ENCODE measurements at regions of chr14 and their contacts with region 1.

Region 1: DNA sequence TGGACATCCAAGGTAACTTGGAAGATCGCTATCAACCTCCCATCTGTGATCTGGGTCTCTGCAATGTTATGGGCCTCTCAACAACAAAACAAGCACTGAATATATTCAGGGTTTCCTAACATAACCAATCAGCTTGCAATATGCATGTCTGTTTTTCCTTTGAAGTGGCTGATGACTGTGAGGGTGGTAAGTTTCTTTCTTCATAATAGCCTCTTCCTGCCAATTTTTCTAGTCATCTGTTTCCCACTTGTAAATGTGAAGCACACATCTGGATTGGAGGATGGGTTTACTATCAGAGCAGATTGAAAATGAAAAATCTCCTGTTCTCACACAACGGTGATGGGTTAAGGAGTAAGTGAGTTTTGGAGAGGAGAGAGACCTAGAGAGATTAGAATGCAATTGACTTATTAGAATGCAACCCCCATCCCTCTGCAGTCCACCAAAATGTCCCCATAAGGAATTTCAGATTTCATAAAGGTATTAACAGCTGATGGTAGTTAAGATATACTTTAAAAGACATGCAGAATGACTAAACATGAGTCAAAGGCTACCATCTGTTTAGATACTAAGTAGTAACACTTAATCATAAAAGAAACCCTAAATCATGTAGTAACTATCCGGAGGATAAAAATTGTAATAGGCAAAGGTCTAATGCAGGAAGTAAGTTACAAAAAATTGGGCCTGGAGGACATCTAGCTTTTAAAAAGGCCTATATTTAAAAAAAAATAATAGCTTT is 58.4 kb upstream of the SAV1 start:
- DNase-seq: peak; percentile 37
- H3K4me3 Mint-ChIP-seq: peak overlapping the region; percentile 52
- H3K27ac Mint-ChIP-seq: peak overlapping the region; percentile 92
- H3K4me1 Mint-ChIP-seq: peaks cover 23% of the 10 kb centered on the region
- H3K27me3 Mint-ChIP-seq: no peaks in the 10 kb centered on the region

Region 2: DNA sequence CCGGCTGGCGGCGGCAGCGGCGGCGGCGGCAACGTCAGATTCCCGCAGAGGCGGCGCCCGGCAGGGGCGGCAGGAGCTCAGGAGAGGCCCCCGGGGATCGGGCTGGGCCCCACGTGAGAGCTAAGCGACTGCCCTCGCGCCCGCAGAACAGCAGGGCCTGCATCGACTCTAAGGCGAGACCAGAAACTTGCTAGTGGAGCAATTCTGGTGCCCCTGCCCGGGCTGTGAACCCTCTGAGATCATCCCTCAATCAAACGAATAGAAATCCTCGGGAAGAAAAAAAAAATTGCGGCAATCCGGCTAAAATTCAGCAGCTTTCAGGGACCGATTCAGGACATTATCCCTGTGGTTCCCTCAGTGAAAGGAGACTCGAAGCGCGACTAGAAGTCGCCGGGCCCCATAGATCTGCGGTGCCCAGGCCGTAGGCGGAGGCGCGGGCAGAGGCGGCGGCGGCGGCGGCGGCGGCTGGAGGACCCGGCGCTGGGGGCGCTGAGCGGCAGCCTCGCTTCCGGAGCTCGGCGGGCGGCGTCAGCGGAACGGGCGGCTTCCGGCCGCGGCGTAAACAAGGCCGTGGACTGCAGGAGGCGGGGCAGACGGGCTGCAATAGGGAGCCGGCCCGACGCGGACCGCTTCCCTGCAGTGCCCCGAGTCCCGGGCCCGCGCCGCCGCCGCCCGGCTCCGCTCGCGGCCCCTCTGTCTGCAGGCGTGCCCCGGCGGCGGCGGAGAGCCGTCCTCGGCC is 958.8 kb before region 1 on chr14 and contains the start of gene KLHDC2:
- intact Hi-C with region 1: loop called (anchors 5 kb)
- DNase-seq: peak; percentile 89
- H3K4me3 Mint-ChIP-seq: peak within 1 kb of the TSS; percentile 99
- H3K27ac Mint-ChIP-seq: peak within 1 kb of the TSS; percentile 100
- H3K4me1 Mint-ChIP-seq: peaks cover 33% of the 10 kb centered on the region
- H3K27me3 Mint-ChIP-seq: peaks cover 2% of the 10 kb centered on the region
- total RNA-seq, gene KLHDC2: 23.7 and 26.2 TPM in 2 replicates

Region 3: DNA sequence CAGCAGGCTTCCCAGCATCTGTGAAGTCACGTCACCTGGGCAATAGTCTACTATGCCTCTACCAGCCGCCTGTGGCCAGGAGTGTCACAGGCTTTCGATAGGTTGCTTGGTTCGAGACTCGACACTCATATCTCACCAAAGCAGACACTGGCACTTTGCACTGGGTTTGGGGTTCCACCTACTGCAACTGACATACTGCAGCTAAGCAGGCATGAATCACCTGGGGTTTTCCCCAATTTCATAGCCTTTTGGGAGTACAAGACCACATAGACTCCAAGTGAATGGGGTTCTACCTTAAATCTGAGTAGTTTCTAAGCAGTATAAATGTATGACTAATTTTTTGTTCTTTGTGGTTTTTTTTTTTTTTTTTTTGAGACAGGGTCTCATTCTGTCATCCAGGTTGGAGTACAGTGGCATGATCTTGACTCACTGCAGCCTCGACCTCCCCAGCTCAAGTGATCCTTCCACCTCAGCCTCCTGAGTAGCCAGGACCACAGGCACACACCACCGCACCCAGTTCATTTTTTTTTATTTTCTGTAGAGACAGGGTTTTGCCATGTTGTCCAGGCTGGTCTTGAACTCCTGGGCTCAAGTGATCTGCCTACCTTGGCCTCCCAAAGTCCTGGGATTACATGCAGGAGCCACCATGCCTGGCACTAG is 382.3 kb before region 1 on chr14:
- intact Hi-C with region 1: loop called (anchors 1 kb)
- DNase-seq: peak; percentile 47
- H3K4me3 Mint-ChIP-seq: peak overlapping the region; percentile 30
- H3K27ac Mint-ChIP-seq: peak overlapping the region; percentile 69
- H3K4me1 Mint-ChIP-seq: peaks cover 32% of the 10 kb centered on the region
- H3K27me3 Mint-ChIP-seq: peaks cover 18% of the 10 kb centered on the region

Region 4: GRCh38 chr14:50667996-50668825 is 58.3 kb before region 1 on chr14 and contains the start of gene SAV1:
- intact Hi-C with region 1: loop called (anchors 2 kb)
- DNase-seq: peak; percentile 20
- H3K4me3 Mint-ChIP-seq: peak within 1 kb of the TSS; percentile 86
- H3K27ac Mint-ChIP-seq: peak within 1 kb of the TSS; percentile 47
- H3K4me1 Mint-ChIP-seq: peaks cover 15% of the 10 kb centered on the region
- H3K27me3 Mint-ChIP-seq: peaks cover 10% of the 10 kb centered on the region
- total RNA-seq, gene SAV1: 10.3 and 12.3 TPM in 2 replicates

Region 5: GRCh38 chr14:50762001-50762930 is 35.7 kb after region 1 on chr14:
- intact Hi-C with region 1: loop called (anchors 1 kb)
- DNase-seq: no peak
- H3K4me3 Mint-ChIP-seq: peak overlapping the region; percentile 7
- H3K27ac Mint-ChIP-seq: peak overlapping the region; percentile 74
- H3K4me1 Mint-ChIP-seq: peaks cover 19% of the 10 kb centered on the region
- H3K27me3 Mint-ChIP-seq: no peaks in the 10 kb centered on the region

Region 6: DNA sequence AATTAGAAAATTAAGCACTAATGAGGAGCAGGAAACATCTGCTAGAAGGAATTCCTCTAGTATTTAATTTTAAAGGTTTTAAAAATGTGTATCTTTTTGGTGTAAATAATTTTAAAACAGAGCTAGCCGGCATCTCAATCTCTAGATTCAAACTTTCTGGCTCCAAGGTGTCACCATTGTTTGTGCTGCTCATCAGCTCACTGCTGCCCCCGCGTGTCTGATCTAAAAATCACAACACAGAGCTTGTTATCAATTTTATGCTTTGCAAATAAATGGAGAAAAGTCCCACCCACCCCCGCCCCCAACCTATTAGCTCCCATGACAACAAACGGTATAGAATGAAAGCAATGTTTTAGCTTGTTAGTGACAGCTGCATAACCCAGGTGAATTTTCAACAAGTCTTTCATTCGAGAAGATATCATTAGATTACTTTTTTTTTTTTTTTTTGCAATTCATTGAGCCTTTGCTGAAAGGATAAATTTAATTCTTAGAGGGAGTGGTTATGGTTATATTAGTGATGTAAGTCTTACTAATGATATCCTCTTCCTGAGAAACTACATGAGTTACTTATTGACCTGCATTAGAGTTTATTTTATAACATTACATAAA is 134.0 kb after region 1 on chr14:
- intact Hi-C with region 1: loop called (anchors 1 kb)
- DNase-seq: peak; percentile 71
- H3K4me3 Mint-ChIP-seq: peak overlapping the region; percentile 84
- H3K27ac Mint-ChIP-seq: no peak overlapping the region
- H3K4me1 Mint-ChIP-seq: peaks cover 18% of the 10 kb centered on the region
- H3K27me3 Mint-ChIP-seq: peaks cover 28% of the 10 kb centered on the region

Region 7: GRCh38 chr14:52319919-52320318 is 1593.4 kb after region 1 on chr14:
- intact Hi-C with region 1: loop called (anchors 5 kb)
- DNase-seq: no peak
- H3K4me3 Mint-ChIP-seq: peak overlapping the region; percentile 87
- H3K27ac Mint-ChIP-seq: peak overlapping the region; percentile 67
- H3K4me1 Mint-ChIP-seq: peaks cover 78% of the 10 kb centered on the region
- H3K27me3 Mint-ChIP-seq: peaks cover 1% of the 10 kb centered on the region

Measured in activated T-helper 1 cell treated with anti-CD3 and anti-CD28 coated beads, Interleukin-12 subunit alpha, Interleukin-12 subunit beta, Interleukin-2, Interleukin-4 antibody, amounts not matched to agents 30 ng/mL and 10 ng/mL and 1 ng/mL, durations not matched to agents 14 hours and 24 hours and 36 hours (primary cell).